Left cardiac atrium (tissue), 4 donors: ENCODE measurements at regions of chr18 and their contacts with region 1.

Region 1: DNA sequence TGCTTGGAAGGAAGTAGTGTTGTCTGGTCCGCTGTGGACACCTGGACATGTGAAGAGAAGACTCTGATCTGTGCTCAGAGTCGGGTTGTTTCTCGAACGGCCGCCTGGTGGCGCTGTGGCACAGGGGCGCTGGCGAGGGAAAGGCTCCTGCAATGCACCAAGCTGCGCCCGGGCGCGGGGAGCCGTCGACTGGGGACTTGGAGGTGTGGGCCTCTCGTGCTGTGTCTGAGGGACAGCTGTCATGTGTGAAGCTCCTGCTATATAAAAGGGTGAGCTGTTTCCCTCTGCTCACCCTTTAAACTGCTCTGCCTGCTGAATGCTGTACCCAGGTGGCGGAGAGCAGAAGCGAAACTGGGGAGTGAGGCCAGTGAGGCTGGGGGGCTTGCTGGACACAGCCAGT is 44.0 kb downstream of the GNAL start:
- DNase-seq: peak; percentile 79
- ATAC-seq: peak; percentile 89 to 93

Region 2: DNA sequence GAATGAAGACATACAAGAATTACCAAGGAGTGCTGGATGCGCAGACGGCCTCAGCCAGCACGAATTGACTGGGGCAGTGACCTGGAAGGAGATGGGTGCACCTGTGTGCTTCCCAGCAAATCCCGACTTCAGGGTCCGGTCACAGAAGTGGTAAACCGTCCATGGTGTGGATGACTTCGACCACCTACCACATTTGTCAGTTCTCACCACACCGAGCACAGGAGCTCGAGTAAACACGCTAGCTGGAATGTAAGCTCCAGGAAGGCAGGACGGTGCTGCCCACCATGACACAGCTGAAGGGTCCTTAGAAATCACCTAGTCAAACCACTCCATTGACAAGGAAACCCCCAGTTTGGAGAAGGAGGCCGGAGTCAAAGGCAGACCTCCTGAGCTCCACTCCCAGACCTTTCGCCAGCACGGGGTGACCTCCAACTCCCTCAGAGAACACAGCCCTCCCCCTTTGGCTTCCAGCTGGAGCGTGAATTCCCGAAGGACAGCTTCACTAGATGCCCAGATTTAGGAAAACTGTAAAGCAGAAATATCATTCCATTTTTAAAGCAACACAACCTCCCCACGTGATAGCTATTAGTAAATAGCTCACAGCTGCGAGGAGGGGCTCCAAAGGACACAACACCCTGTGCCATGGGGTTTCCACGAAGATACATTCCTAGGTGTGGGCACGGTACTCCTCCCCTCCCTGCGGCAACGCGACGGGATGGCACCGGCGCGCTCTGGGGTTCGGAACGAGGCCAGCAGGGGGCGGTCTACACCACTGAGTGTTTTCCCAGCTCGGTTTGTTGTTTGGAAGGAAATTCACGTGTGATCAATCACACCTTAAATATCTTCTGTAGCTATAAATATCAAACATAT is 78.1 kb before region 1 on chr18:
- intact Hi-C with region 1: loop called in 1 of 2 experiments (anchors 5 kb)
- DNase-seq: peak; percentile 57
- ATAC-seq: peak; percentile 77 to 80

Region 3: DNA sequence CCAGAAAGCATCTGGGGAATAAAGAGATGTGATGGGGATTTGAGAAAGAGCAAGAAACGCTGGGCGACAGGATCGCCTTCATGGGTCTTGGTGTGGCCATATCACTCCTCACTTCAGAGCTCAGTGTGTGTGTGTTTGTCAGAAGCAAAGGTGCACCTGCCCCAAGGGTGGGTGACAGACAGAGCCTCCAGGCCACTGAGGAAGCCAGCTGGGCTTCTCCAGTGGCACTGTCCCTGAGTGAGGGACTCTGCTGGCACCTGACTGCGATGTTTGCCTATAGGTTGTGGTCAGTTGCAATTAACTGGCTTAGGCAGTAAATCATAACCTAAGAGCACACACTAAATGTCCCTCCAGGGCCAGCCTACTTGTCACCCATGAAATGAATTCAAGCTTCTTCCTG is 67.4 kb before region 1 on chr18:
- intact Hi-C with region 1: no loop called
- DNase-seq: no peak
- ATAC-seq: no peak

Region 4: GRCh38 chr18:11872479-11873136 is 139.6 kb after region 1 on chr18:
- intact Hi-C with region 1: loop called (anchors 1 to 5 kb)
- DNase-seq: no peak
- ATAC-seq: peak; percentile 87 to 92

Region 5: GRCh38 chr18:12049978-12050811 is 317.2 kb after region 1 on chr18:
- intact Hi-C with region 1: loop called in 1 of 2 experiments (anchors 10 kb)
- DNase-seq: no peak
- ATAC-seq: no peak